Posterior vena cava (tissue), 2 donors: ENCODE measurements at regions of chr5 and their contacts with region 1.

Region 1: GRCh38 chr5:149094981-149095380 is 32.1 kb upstream of the SH3TC2 start:
- DNase-seq: no peak

Region 2: DNA sequence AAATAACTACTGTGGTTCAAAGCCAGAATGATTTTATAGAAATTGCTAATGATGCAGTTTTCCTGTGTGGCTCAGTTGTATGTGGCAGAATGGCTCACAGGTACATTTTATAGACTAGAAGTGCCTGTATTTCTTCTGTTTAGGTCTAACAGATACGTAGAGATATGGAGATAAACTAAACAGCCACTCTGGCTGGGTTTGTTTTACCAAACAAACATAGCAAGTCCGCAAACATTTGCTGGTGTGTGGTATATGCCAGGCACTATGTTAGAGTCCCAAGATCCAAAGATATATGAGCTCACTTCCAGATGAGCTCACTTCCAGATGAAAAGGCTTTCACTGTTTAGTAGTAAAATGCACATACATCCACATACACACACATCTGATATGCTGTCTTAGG is 244.1 kb before region 1 on chr5:
- intact Hi-C with region 1: loop called in 1 of 2 experiments (anchors 2 kb)
- DNase-seq: no peak